ENCODE measurements at regions of chr1 and their contacts with region 1.

Region 1: DNA sequence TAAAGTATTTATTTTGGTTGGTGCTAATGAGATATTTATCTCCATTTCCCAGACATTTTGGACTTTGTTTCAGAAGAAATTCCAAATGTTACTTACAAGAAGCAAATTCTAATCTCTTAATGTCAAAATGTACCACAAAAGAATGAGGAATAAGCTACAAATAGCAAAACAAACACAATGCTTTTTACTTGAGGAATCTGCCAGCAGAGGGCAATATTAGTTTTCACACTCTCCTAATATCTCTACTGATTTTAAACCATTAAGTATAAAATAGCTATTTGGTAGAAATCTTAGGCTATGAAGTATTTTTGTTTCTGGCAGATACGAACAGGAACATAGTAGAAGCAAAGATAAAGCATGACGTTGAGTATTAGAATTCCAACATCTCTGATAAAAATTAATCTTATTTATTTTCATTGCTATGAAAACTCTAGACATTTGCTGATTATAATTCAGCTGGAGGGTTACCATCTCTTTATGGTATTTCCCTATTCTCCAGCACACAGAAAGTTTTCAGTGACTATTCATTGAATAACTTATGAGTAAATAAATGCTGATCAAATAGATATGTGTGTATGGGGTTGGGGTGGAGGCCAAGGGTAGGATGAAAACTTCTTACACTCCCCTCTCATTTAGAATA is 13.4 kb upstream of the HMCN1 start:
- DNase-seq: no peak
- ATAC-seq: no peak
- H3K4me3 Mint-ChIP-seq: no peak overlapping the region
- H3K27ac Mint-ChIP-seq: no peak overlapping the region
- H3K4me1 Mint-ChIP-seq: no peaks in the 10 kb centered on the region
- H3K27me3 Mint-ChIP-seq: no peaks in the 10 kb centered on the region
- CTCF ChIP-seq: 0 out of 2 replicates have a peak, but pooled peaks have one; percentile 31

Region 2: GRCh38 chr1:185733818-185734771 is 13.3 kb after region 1 on chr1 and contains the start of gene HMCN1:
- CTCF ChIA-PET with region 1: interaction called, 66 read pairs
- POLR2A ChIA-PET with region 1: interaction called, 5 read pairs
- DNase-seq: peak; percentile 90
- ATAC-seq: peak; percentile 89
- H3K4me3 Mint-ChIP-seq: peak within 1 kb of the TSS; percentile 89
- H3K27ac Mint-ChIP-seq: peak within 1 kb of the TSS; percentile 96
- H3K4me1 Mint-ChIP-seq: peaks cover 31% of the 10 kb centered on the region
- H3K27me3 Mint-ChIP-seq: peaks cover 22% of the 10 kb centered on the region
- CTCF ChIP-seq: no peak
- total RNA-seq, gene HMCN1: 5.6 to 10.6 TPM (median 10.5 TPM) in 3 replicates

Region 3: DNA sequence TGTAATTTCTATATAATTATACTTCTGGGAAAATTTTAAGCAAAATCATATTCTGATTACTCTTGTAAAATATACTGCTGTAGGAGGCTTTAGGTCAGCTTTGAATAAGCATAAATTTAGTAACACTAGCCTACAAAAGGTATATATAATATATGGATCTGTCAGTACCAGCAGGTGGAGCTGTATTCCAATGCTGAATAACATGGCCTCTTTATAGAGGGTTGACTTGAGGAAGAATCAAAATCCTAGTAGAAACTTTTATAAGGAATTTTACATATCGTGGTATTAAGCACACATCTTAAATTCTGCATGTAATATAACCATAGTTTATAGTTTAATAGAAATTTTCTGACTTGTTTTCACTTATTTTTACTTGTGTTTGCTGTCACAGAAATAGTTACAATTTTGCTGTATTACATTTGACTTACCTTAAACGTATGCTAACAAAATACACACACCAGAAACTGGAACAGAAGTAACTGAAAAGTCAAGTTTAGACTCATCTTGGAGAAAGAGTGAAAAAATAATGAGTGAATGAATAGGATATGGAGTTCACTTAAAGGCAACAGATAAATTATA is 92.7 kb after region 1 on chr1:
- CTCF ChIA-PET with region 1: interaction called, 13 read pairs
- POLR2A ChIA-PET with region 1: no interaction called
- DNase-seq: no peak
- ATAC-seq: peak; percentile 88
- H3K4me3 Mint-ChIP-seq: no peak overlapping the region
- H3K27ac Mint-ChIP-seq: no peak overlapping the region; the same call in 1 of the 2 replicates
- H3K4me1 Mint-ChIP-seq: peaks cover 16% of the 10 kb centered on the region
- H3K27me3 Mint-ChIP-seq: no peaks in the 10 kb centered on the region
- CTCF ChIP-seq: peak; percentile 38

Region 4: DNA sequence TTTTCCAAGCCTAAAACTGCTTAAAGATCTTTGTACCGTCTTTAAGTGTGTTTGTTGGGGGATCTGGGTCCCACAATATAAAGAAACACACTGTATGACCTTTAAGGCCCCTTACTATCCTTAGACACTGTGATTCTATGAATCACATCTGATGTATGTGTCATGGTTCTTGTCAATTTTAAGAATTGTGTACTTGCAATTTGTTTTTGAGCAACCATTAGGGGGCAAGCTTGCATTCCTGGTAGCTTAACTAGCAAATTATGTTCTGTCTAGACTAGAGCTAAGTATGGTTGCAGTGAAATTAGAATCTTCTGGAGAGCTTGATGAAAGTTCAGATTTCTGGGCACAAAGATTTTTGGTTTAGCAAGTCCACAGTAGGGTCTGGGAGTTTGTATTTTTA is 434.8 kb after region 1 on chr1:
- CTCF ChIA-PET with region 1: interaction called, 17 read pairs
- POLR2A ChIA-PET with region 1: no interaction called
- DNase-seq: no peak
- ATAC-seq: peak; percentile 66
- H3K4me3 Mint-ChIP-seq: no peak overlapping the region
- H3K27ac Mint-ChIP-seq: no peak overlapping the region
- H3K4me1 Mint-ChIP-seq: no peaks in the 10 kb centered on the region
- H3K27me3 Mint-ChIP-seq: no peaks in the 10 kb centered on the region; the same call in 1 of the 2 replicates
- CTCF ChIP-seq: no peak

Region 5: DNA sequence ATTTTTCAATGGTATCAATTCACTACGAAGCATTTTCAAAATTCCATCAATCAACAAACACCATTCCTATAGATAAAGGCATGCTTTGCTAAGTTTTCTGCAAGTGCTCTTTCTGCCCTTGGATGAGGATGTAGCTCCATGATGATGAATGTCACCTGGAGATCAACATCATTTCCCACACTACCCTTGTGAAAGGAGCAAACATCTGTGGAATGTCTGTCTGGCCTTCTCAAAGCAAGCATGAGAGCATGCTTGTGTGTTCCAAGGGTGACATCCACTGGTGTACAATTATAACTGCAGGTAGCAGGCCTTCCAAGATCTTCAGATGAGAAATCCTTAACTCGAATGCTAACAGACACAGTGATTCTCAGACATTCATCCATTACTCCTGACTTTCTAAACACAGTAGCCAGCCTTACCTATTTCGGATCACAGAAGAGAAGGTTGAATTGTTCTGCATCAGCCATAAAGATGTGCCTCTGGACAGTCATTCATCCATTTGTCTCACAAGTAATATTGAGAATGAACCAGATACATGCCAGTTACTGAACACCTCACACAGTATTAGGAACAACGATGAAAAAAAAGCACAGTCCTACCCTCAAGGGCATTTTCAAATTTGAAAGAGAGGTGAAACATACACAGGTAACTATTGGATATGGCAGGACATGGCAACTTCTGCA is 491.9 kb after region 1 on chr1:
- CTCF ChIA-PET with region 1: interaction called, 50 read pairs
- POLR2A ChIA-PET with region 1: no interaction called
- DNase-seq: peak; percentile 40
- ATAC-seq: peak; percentile 98
- H3K4me3 Mint-ChIP-seq: no peak overlapping the region
- H3K27ac Mint-ChIP-seq: no peak overlapping the region
- H3K4me1 Mint-ChIP-seq: peaks cover 12% of the 10 kb centered on the region
- H3K27me3 Mint-ChIP-seq: no peaks in the 10 kb centered on the region
- CTCF ChIP-seq: peak; percentile 58